Endothelial cell of umbilical vein (primary cell): ENCODE measurements at regions of chr22 and their contacts with region 1.

Region 1: DNA sequence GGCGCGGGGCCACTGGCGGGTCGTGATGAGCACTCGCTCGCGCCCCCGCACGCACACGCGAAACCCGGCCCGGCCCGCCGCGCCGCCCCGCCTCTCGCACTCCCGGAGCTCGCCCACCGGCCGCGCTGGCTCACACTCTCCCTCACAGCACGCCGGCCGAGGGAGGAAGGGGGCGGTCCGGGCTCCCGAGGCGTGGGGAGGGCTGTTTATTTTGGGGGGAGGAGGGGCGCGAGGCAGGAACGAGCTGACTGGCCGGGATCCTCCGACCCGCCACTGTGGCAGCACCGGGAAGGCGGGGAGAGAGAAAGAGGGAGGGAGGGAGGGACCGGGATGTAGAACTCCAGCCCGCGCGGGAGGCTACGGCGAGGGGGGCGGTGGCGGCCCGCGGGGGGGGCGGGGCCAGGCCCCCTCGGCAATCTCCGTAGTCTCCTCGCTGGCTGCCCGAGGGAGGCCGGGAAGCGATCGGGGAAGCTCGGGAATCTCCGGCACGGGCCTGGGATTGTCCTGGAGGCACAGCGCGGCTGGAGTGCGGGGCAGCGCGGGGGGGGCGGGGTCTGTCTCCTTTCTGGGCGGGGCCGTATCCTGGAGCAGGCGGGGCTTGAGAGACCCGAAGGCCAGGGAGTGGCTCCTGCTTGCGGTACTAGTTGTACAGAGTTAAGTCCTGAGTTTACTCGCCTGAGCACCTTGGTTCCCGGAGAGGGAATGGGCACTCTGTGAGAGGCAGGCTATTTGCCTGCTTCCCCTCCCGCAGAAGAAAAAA is at the start of gene RBFOX2:
- DNase-seq: peak; percentile 97
- H3K4me3 ChIP-seq: peak within 1 kb of the TSS; percentile 60 to 80 (median 74)
- H3K27ac ChIP-seq: peak within 1 kb of the TSS; percentile 53
- H3K4me1 ChIP-seq: peaks cover 21% of the 10 kb centered on the region
- H3K27me3 ChIP-seq: no peaks in the 10 kb centered on the region
- CTCF ChIP-seq: no peak
- POLR2A ChIP-seq: peak; percentile 11
- total RNA-seq, gene RBFOX2: 125 and 129 TPM in 2 replicates

Region 2: DNA sequence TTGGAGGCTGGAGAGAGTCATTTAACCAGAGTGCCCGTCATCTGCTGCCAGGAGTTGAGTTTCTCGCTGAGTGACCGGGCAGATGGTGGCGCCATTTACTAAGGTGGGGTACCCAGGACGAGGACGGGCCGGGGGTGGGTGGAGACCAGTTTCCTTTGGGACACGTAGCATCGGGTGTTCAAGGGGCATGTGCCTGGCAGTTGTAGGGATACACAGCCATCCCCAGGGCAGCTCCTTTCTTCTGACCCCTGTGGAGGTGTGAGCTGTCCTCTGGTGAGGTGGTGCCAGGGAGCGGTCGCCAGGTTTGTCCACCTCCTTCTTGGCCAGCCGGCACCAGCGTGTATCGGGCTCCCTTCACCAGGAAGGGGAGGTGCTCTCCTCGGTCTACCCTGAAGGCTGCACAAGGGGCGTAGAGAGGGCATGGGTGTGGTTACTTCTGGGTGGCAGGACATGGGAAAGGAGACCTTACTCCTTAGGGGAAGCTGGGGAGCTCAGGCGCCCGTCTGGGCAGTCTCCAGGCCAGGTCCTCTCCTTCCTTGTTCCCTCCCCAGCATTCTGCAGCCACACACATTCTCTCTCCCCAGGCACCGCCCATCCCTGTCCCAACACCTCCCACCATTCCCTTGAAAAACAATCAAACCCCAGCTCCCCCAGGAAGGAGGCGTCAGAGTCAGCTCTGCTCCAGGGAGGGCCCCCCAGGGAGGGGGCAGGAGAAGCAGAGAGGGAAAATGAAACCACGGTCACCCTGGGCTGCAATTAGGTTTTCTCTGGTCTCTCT is 401.4 kb before region 1 on chr22:
- CTCF ChIA-PET with region 1: interaction called, 3 read pairs
- POLR2A ChIA-PET with region 1: no interaction called
- dilution Hi-C with region 1: no loop called
- intact Hi-C with region 1: loop called (anchors 1 kb)
- DNase-seq: peak; percentile 76
- H3K4me3 ChIP-seq: peak overlapping the region; percentile 27 to 58 (median 51)
- H3K27ac ChIP-seq: peak overlapping the region; percentile 30
- H3K4me1 ChIP-seq: peaks cover 8% of the 10 kb centered on the region
- H3K27me3 ChIP-seq: no peaks in the 10 kb centered on the region
- CTCF ChIP-seq: peak; percentile 48 to 54
- POLR2A ChIP-seq: peak; percentile 21

Region 3: GRCh38 chr22:35840302-35840739 is 188.5 kb before region 1 on chr22:
- CTCF ChIA-PET with region 1: no interaction called
- POLR2A ChIA-PET with region 1: no interaction called
- dilution Hi-C with region 1: no loop called
- intact Hi-C with region 1: loop called (anchors 5 kb)
- DNase-seq: peak; percentile 96
- H3K4me3 ChIP-seq: peak overlapping the region; percentile 57 to 87 (median 80)
- H3K27ac ChIP-seq: peak overlapping the region; percentile 73
- H3K4me1 ChIP-seq: peaks cover 40% of the 10 kb centered on the region
- H3K27me3 ChIP-seq: no peaks in the 10 kb centered on the region
- CTCF ChIP-seq: no peak
- POLR2A ChIP-seq: peak; percentile 52

Region 4: GRCh38 chr22:35961480-35962295 is 67.1 kb before region 1 on chr22:
- CTCF ChIA-PET with region 1: interaction called, 4 read pairs
- POLR2A ChIA-PET with region 1: interaction called, 3 read pairs
- dilution Hi-C with region 1: no loop called
- intact Hi-C with region 1: loop called (anchors 1 kb)
- DNase-seq: peak; percentile 85
- H3K4me3 ChIP-seq: peak overlapping the region in 1 of 3 experiments; percentile 52
- H3K27ac ChIP-seq: peak overlapping the region; percentile 89
- H3K4me1 ChIP-seq: peaks cover 36% of the 10 kb centered on the region
- H3K27me3 ChIP-seq: no peaks in the 10 kb centered on the region
- CTCF ChIP-seq: no peak
- POLR2A ChIP-seq: no peak

Region 5: GRCh38 chr22:36015811-36016529 is 12.9 kb before region 1 on chr22:
- CTCF ChIA-PET with region 1: interaction called, 10 read pairs
- POLR2A ChIA-PET with region 1: interaction called, 3 read pairs
- dilution Hi-C with region 1: no loop called
- intact Hi-C with region 1: loop called (anchors 2 kb)
- DNase-seq: no peak
- H3K4me3 ChIP-seq: no peak overlapping the region
- H3K27ac ChIP-seq: no peak overlapping the region
- H3K4me1 ChIP-seq: peaks cover 3% of the 10 kb centered on the region
- H3K27me3 ChIP-seq: no peaks in the 10 kb centered on the region
- CTCF ChIP-seq: no peak
- POLR2A ChIP-seq: no peak